Endothelial cell of umbilical vein (primary cell): ENCODE measurements at regions of chr2 and their contacts with region 1.

Region 1: DNA sequence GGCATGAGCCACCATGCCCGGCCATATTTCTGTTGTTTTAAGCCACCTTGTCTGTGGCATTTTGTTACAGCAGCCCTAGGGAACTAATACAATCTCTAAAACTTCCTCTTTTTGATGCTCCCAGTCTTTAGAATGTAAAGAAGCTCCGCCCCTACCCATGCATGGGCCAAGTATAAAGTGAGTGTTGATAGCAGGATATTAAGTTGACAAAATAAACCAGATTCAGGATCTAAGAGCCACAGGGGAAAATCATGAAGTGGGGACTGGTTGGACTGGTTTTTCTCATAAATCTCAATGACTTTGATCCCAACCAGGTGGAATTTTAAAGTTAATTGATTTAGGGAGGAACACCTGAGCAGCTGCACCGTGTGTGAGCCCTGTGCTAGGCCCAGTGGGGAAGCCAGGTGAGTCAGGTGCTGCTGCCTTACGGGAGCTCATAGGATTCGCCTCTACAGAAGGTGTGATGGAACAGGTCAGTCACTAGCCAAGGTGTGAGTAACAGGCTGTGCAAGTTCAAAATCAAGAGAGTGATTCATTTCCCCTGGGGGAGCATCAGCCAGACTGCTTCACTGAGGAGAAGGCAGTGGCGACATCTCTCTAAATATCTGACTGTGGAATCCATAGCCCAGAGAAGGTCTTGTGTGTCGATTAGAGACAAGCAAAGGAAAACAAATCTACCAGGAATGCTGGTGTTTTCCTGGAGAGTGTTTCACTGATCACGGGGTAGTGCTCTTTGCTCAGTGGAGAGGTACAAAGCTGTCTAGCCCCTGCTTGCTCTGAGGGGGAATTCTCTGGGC is 63.0 kb upstream of the MSH2 start:
- DNase-seq: no peak
- H3K4me3 ChIP-seq: no peak overlapping the region
- H3K27ac ChIP-seq: no peak overlapping the region
- H3K4me1 ChIP-seq: peaks cover 5% of the 10 kb centered on the region
- H3K27me3 ChIP-seq: no peaks in the 10 kb centered on the region
- CTCF ChIP-seq: no peak
- POLR2A ChIP-seq: no peak

Region 2: GRCh38 chr2:47354013-47354847 is 14.3 kb after region 1 on chr2:
- CTCF ChIA-PET with region 1: interaction called, 16 read pairs
- POLR2A ChIA-PET with region 1: interaction called, 5 read pairs
- dilution Hi-C with region 1: no loop called
- intact Hi-C with region 1: loop called (anchors 1 kb)
- DNase-seq: peak; percentile 74
- H3K4me3 ChIP-seq: no peak overlapping the region
- H3K27ac ChIP-seq: peak overlapping the region; percentile 79
- H3K4me1 ChIP-seq: peaks cover 16% of the 10 kb centered on the region
- H3K27me3 ChIP-seq: no peaks in the 10 kb centered on the region
- CTCF ChIP-seq: no peak
- POLR2A ChIP-seq: no peak

Region 3: GRCh38 chr2:47373747-47374146 is 33.8 kb after region 1 on chr2:
- CTCF ChIA-PET with region 1: interaction called, 27 read pairs
- POLR2A ChIA-PET with region 1: no interaction called
- dilution Hi-C with region 1: no loop called
- intact Hi-C with region 1: no loop called
- DNase-seq: no peak
- H3K4me3 ChIP-seq: no peak overlapping the region
- H3K27ac ChIP-seq: no peak overlapping the region
- H3K4me1 ChIP-seq: peaks cover 9% of the 10 kb centered on the region
- H3K27me3 ChIP-seq: peaks cover 5 to 8% of the 10 kb centered on the region in 2 experiments
- CTCF ChIP-seq: no peak
- POLR2A ChIP-seq: no peak

Region 4: DNA sequence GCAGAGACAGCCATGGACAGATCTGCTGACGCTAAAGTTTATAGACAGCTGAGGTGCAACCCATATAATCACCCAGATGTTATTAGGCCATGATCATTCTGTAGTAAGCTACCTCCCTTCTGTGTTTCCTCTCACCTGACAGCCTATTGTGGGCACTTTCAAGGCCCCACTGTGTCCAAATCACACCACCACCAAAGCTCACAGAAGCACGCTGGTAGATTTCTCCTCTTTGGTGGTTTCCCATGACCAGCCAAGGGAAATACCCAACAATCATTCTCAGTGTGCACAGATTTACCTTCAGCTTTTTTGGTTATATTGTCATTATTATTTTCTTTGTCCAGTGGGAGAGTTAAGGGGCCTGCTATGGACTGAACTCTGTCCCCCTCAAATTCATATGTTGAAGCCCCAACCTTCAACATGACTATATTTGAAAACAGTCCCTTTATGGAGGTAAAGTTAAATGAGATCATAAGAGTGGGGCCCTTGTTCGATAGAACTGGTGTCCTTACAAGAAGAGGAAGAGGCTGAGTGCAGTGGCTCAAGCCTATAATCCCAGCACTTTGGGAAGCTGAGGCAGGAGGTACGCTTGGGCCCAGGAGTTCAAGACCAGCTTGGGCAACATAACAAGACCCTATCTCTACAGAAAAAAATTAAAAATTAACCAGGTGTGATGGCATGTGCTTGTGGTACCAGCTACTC is 369.0 kb after region 1 on chr2:
- CTCF ChIA-PET with region 1: no interaction called
- POLR2A ChIA-PET with region 1: no interaction called
- dilution Hi-C with region 1: no loop called
- intact Hi-C with region 1: no loop called
- DNase-seq: no peak
- H3K4me3 ChIP-seq: no peak overlapping the region
- H3K27ac ChIP-seq: no peak overlapping the region
- H3K4me1 ChIP-seq: no peaks in the 10 kb centered on the region
- H3K27me3 ChIP-seq: no peaks in the 10 kb centered on the region
- CTCF ChIP-seq: no peak
- POLR2A ChIP-seq: no peak